Brain microvascular endothelial cell (primary cell): ENCODE measurements at regions of chr2 and their contacts with region 1.

Region 1: DNA sequence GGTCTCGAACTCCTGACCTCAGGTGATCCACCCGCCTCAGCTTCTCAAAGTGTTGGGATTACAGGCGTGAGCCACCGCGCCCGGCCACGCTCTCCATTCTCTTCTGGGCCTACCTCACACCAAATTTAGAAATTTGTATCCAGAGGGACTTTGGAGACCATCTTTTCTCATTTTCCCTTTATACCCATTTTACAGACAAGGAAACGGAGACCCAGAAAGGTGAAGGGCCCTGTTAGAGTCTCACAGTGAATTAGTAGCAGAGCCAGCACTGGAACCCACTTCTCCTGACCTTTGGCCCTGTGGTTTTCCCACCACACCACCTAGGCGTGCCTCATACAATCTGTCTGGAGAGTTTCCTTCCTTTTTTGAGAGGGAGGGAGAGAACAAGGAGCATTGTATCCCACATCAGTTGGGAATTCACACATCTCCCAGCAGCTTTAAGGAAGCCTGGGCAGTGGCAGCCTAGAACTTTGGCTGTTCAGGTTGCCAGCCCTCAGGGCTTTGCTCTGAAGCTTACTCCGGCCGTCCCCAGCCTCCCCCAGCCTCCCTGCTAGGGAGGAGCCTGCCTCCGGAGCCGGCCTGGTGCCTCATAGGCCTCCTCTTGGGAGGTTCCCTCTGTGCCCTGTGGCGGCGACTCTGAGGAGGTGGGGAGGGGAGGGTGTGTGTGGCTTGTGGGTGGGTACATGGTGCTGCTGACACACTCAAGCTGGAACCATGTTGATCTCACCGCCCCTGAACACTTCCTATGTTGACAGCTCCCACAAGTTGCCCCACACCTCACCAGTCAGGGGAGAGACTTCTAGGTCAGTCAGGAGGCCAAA is 13.8 kb downstream of the FOSL2 start:
- DNase-seq: peak; percentile 54
- H3K4me3 ChIP-seq: no peak overlapping the region
- H3K27ac ChIP-seq: peak overlapping the region; percentile 93
- H3K27me3 ChIP-seq: no peaks in the 10 kb centered on the region
- CTCF ChIP-seq: peak; percentile 36

Region 2: DNA sequence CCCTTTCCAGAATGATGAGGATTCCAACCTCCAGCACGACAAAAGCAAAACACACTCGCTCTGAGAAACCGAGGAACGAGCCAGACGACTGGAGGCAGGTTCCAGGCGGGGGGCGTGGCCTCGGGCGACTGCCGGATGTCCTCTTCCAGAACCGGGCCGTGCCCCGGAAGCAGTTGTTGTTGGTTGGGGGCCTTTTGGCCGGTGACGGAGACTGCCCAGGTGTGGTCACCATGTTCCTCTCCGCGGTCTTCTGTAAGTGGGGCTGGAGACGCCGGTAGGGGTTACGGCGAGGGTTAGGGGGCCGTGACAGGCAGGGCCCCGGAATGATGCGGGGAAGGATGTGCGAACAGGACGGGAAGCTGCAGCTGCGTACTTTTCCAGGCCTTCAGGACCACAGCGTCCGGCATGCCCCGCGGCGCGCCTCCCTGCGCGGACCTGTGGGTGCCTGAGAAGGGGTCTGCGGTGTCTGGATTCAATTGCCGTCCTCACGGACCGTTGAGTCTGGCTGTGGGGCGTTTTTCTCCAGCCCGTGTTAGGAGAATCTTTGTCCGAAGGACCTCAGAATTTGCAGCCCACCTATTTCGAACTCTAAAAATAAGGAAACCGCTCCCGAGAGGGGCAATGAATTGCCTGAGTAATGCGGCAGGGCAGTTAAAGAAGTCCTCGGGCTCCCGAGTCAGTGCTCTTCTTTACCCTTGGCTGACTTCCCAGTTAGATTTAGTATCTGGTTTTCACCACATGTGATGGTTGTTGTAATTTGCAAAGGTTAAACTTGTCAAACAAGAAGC is 634.7 kb before region 1 on chr2 and contains the start of gene MRPL33:
- in situ Hi-C with region 1: loop called (anchors 25 kb)
- DNase-seq: peak; percentile 89
- H3K4me3 ChIP-seq: peak within 1 kb of the TSS; percentile 91
- H3K27ac ChIP-seq: peak within 1 kb of the TSS; percentile 87
- H3K27me3 ChIP-seq: no peaks in the 10 kb centered on the region
- CTCF ChIP-seq: no peak